ENCODE measurements at regions of chr13 and their contacts with region 1.

Region 1: DNA sequence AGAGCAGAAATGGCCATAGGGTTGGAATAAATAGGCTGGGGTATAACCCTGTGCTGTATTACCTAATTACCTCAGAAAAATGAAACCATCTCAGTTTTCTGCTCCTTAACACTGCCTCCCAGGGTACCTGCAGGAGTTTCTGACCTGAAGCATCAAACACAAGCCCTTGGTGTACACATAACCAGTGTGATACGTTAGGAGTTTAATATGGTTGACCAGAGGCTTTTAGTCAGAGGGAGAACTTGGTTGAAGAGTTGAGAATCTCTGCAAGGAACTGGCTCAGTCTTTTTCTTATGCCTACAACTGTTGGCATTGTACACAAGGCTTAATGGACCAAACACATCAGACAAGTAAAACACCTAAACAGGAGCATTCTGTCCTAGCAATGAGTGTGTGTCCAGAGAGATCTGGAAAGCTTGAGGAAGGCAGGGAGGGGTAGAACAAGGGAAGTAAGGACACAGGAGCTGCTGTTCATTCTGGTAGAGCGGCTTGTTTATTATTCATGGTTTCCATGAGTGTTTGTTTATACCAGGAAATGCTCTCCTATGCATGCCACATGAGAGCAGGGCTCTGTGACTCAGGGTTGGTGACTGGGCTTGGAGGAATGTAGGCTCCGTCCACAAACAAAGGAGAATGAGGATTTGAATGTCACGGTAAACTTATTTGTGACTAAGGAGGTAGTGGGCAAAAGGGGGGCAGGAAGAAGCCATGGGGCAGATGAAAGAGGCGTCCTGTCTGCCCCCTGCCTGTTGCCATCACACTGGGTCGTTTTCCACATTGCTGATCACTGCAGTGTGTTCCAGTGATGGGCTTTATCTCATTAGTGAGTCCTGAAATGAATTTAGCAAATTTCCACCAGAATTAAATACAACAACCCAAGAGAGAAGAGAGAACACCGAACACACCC is 11.9 kb upstream of the SPATA13 start:
- DNase-seq: peak; percentile 96
- ATAC-seq: peak; percentile 94
- H3K4me3 ChIP-seq: peak overlapping the region; percentile 2 to 28
- H3K27ac ChIP-seq: peak overlapping the region; percentile 70
- H3K4me1 ChIP-seq: peaks cover 22 to 40% of the 10 kb centered on the region in 2 experiments
- H3K27me3 ChIP-seq: no peaks in the 10 kb centered on the region
- CTCF ChIP-seq: 0 out of 6 replicates have a peak, but pooled peaks of 1 of the 3 experiments have one; percentile 12
- POLR2A ChIP-seq: no peak
- RAD21 ChIP-seq: peak; percentile 34

Region 2: GRCh38 chr13:24160454-24161009 is 11.9 kb after region 1 on chr13 and contains the start of gene SPATA13:
- CTCF ChIA-PET with region 1: no interaction called
- POLR2A ChIA-PET with region 1: interaction called, 15 read pairs
- RAD21 ChIA-PET with region 1: no interaction called
- intact Hi-C with region 1: loop called (anchors 1 kb)
- DNase-seq: peak; percentile 75
- ATAC-seq: peak; percentile 84
- H3K4me3 ChIP-seq: peak within 1 kb of the TSS; percentile 88 to 94
- H3K27ac ChIP-seq: peak within 1 kb of the TSS; percentile 72
- H3K4me1 ChIP-seq: peaks cover 23 to 24% of the 10 kb centered on the region in 2 experiments
- H3K27me3 ChIP-seq: no peaks in the 10 kb centered on the region
- CTCF ChIP-seq: no peak
- POLR2A ChIP-seq: peak; percentile 36
- RAD21 ChIP-seq: no peak
- total RNA-seq, gene SPATA13: 21.4 TPM

Region 3: GRCh38 chr13:24982333-24982999 is 833.8 kb after region 1 on chr13:
- CTCF ChIA-PET with region 1: no interaction called
- POLR2A ChIA-PET with region 1: no interaction called
- RAD21 ChIA-PET with region 1: no interaction called
- intact Hi-C with region 1: no loop called
- DNase-seq: no peak
- ATAC-seq: no peak
- H3K4me3 ChIP-seq: no peak overlapping the region
- H3K27ac ChIP-seq: no peak overlapping the region
- H3K4me1 ChIP-seq: no peaks in the 10 kb centered on the region
- H3K27me3 ChIP-seq: no peaks in the 10 kb centered on the region
- CTCF ChIP-seq: no peak
- POLR2A ChIP-seq: no peak
- RAD21 ChIP-seq: no peak